Right cardiac atrium (tissue), 5 donors: ENCODE measurements at regions of chr6 and their contacts with region 1.

Region 1: DNA sequence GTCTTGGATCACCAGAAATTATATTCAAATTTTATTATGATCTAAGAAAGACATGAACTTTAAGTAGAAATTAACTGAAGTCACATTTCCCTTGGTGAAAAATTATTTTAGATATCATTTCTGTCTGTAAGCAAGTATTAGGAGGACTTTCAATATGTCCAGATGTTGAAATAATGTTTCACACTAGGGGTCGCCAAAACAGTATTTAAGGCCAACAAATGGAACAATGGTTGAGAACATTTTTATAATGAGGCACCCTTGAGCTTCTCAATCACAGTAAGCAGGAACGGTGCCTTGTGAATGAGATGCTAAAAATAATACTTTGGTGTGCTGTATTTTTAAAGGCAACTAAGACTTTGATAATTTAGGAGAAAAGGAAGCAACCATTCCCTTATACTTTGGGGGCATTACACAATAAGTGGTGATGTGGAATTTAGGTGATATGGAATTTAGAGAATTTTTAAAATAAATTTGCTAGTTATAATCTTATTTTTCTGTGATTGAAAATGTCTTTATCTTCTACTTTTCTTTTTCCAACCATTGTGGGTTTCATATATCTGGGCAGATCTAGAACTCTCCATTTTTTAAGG is 9.6 kb upstream of the SF3B5 start:
- DNase-seq: no peak
- ATAC-seq: peak; percentile 83 to 88
- H3K4me3 ChIP-seq: no peak overlapping the region
- H3K27ac ChIP-seq: no peak overlapping the region
- H3K4me1 ChIP-seq: no peaks in the 10 kb centered on the region
- H3K27me3 ChIP-seq: no peaks in the 10 kb centered on the region

Region 2: GRCh38 chr6:144482142-144482541 is 377.1 kb after region 1 on chr6:
- intact Hi-C with region 1: loop called in 2 of 4 experiments (anchors 5 to 10 kb)
- DNase-seq: peak; percentile 73 to 92 (median 81)
- ATAC-seq: peak in 1 of 2 donors; percentile 72
- H3K4me3 ChIP-seq: no peak overlapping the region
- H3K27ac ChIP-seq: no peak overlapping the region
- H3K4me1 ChIP-seq: peaks cover 4% of the 10 kb centered on the region
- H3K27me3 ChIP-seq: no peaks in the 10 kb centered on the region